ENCODE measurements at regions of chr20 and their contacts with region 1.

Region 1: GRCh38 chr20:45044084-45044573 is 56.8 kb downstream of the KCNS1 start:
- DNase-seq: peak in 7 of 9 donors; percentile 27 to 69 (median 60)
- ATAC-seq: peak; percentile 92
- H3K4me3 ChIP-seq: no peak overlapping the region
- H3K4me3 Mint-ChIP-seq: peak overlapping the region in 5 of 10 donors; percentile 0 to 31 (median 0)
- H3K27ac ChIP-seq: no peak overlapping the region
- H3K27ac Mint-ChIP-seq: peak overlapping the region; percentile 5 to 78 (median 61)
- H3K4me1 ChIP-seq: peaks cover 22 to 23% of the 10 kb centered on the region in 2 donors
- H3K4me1 Mint-ChIP-seq: peaks cover 34 to 85% (median 75%) of the 10 kb centered on the region in 7 donors
- H3K27me3 ChIP-seq: no peaks in the 10 kb centered on the region
- H3K27me3 Mint-ChIP-seq: no peaks in the 10 kb centered on the region

Region 2: DNA sequence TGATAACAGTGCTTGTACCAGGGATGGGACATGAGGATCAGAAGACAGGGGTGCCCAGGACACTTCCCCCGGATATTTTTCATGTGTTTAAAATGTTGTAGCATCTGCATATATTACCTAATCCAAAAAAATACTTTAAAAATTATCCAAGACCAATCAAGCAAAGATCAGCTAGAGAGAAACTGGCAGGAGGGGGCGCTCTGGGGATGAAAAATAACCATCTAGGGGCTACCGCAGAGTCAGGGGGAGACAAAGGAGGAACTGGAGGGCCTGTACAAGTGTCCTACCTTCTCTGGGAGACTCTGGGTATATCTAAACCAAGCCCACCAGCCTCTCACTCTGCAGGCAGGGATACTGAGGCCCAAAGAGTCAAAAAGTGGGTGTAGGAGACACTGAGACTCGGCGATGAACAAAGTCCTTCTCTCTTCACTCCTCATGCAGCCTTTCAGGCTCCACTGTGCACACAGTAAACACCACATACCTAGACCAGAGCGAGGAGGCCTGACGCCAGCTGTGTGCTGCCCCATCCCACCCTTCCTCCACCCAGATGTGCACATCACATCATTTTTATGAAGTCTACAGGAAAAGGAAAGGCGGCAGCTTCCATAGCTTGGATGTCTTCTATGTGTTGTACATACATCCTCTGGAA is 243.6 kb before region 1 on chr20:
- CTCF ChIA-PET with region 1: no interaction called
- POLR2A ChIA-PET with region 1: no interaction called
- intact Hi-C with region 1: no loop called
- DNase-seq: peak in 1 of 9 donors; percentile 2
- ATAC-seq: no peak
- H3K4me3 ChIP-seq: no peak overlapping the region
- H3K4me3 Mint-ChIP-seq: no peak overlapping the region
- H3K27ac ChIP-seq: no peak overlapping the region
- H3K27ac Mint-ChIP-seq: no peak overlapping the region
- H3K4me1 ChIP-seq: no peaks in the 10 kb centered on the region
- H3K4me1 Mint-ChIP-seq: no peaks in the 10 kb centered on the region
- H3K27me3 ChIP-seq: no peaks in the 10 kb centered on the region
- H3K27me3 Mint-ChIP-seq: peaks cover 10 to 32% (median 17%) of the 10 kb centered on the region in 5 donors

Region 3: GRCh38 chr20:45059022-45059728 is 15.0 kb after region 1 on chr20:
- CTCF ChIA-PET with region 1: interaction called, 7 read pairs
- POLR2A ChIA-PET with region 1: no interaction called
- intact Hi-C with region 1: loop called in 1 of 2 experiments (anchors 1 kb)
- DNase-seq: no peak
- ATAC-seq: no peak
- H3K4me3 ChIP-seq: no peak overlapping the region
- H3K4me3 Mint-ChIP-seq: peak overlapping the region in 4 of 10 donors; percentile 2 to 46 (median 16)
- H3K27ac ChIP-seq: no peak overlapping the region
- H3K27ac Mint-ChIP-seq: peak overlapping the region in 8 of 9 donors; percentile 26 to 77 (median 50)
- H3K4me1 ChIP-seq: peaks cover 10 to 17% of the 10 kb centered on the region in 2 donors
- H3K4me1 Mint-ChIP-seq: peaks cover 33 to 90% (median 83%) of the 10 kb centered on the region in 7 donors
- H3K27me3 ChIP-seq: no peaks in the 10 kb centered on the region
- H3K27me3 Mint-ChIP-seq: no peaks in the 10 kb centered on the region